ENCODE measurements at regions of chr4 and their contacts with region 1.

Region 1: DNA sequence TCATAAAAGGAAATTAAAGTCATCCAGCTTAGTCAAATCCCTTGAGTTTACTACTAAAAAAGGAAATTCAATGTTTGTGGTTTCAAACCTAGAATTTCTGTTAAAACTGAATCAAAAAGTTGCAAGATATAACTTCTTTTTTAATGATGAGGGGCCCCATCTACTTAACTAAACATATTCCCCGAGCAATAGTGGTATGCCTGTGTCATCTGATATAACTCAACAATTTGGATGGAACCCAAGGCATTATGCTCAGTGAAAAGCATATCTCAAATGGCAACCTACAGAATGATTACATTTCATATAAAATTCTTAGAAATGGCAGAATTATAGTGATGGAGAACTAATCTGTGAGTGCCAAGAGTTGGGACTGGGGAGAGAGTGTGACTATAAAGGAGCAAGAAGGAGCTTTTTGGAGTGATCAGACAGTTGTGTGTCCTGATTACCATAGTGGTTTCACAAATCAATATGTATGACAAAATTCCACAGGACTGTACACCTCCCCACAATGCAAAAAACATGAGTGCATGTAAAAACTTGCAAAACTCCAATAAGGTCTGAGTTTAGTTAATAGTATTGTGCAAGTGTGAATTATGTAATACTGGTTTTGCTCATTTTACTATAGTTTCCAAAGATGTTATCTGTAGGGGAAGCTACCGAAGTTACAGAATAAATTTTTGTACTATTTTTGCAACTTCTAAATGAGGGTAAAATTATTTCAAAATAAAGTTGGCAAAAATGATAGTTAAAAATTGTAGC is 323.2 kb downstream of the ARHGAP24 start:
- DNase-seq: peak in 1 of 3 donors; percentile 5
- H3K4me3 ChIP-seq: no peak overlapping the region
- H3K27ac ChIP-seq: no peak overlapping the region
- H3K4me1 ChIP-seq: peaks cover 0 to 3% (median 0%) of the 10 kb centered on the region in 4 experiments
- H3K27me3 ChIP-seq: no peaks in the 10 kb centered on the region

Region 2: GRCh38 chr4:85812776-85813175 is 14.6 kb after region 1 on chr4:
- CTCF ChIA-PET with region 1: interaction called, 16 read pairs
- POLR2A ChIA-PET with region 1: no interaction called
- DNase-seq: no peak
- H3K4me3 ChIP-seq: no peak overlapping the region
- H3K27ac ChIP-seq: no peak overlapping the region
- H3K4me1 ChIP-seq: no peaks in the 10 kb centered on the region
- H3K27me3 ChIP-seq: no peaks in the 10 kb centered on the region

Region 3: GRCh38 chr4:85968945-85969819 is 171.0 kb after region 1 on chr4:
- CTCF ChIA-PET with region 1: interaction called, 12 read pairs
- POLR2A ChIA-PET with region 1: no interaction called
- DNase-seq: peak; percentile 31 to 58 (median 50)
- H3K4me3 ChIP-seq: no peak overlapping the region
- H3K27ac ChIP-seq: no peak overlapping the region
- H3K4me1 ChIP-seq: peaks cover 0 to 2% (median 0%) of the 10 kb centered on the region in 4 experiments
- H3K27me3 ChIP-seq: no peaks in the 10 kb centered on the region

Region 4: DNA sequence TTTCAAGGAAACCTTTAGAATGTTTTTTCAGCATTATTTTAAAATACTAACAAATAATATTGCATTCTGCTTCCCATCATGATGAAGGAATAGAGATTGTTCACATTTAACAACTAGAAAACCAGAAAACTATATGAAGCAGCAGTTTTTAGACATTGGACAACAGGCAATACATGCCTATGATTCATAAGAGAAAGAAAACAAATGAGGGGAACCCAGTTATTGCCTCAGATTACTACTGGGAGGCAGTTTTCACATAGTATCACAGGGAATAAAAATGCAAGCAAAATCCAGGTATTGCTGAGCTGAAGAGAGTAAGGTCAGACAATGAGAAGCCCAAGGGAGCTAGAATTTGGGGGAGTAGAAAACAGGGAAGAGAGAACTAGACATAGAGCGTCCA is 188.1 kb after region 1 on chr4:
- CTCF ChIA-PET with region 1: no interaction called
- POLR2A ChIA-PET with region 1: no interaction called
- DNase-seq: no peak
- H3K4me3 ChIP-seq: no peak overlapping the region
- H3K27ac ChIP-seq: no peak overlapping the region
- H3K4me1 ChIP-seq: no peaks in the 10 kb centered on the region
- H3K27me3 ChIP-seq: no peaks in the 10 kb centered on the region

Region 5: GRCh38 chr4:86117705-86118302 is 319.6 kb after region 1 on chr4:
- CTCF ChIA-PET with region 1: no interaction called
- POLR2A ChIA-PET with region 1: no interaction called
- DNase-seq: no peak
- H3K4me3 ChIP-seq: no peak overlapping the region
- H3K27ac ChIP-seq: no peak overlapping the region
- H3K4me1 ChIP-seq: peaks cover 0 to 4% (median 0%) of the 10 kb centered on the region in 4 experiments
- H3K27me3 ChIP-seq: no peaks in the 10 kb centered on the region

Measured in common myeloid progenitor, CD34-positive (primary cell).